CD4-positive, alpha-beta T cell (primary cell): ENCODE measurements at regions of chr12 and their contacts with region 1.

Region 1: DNA sequence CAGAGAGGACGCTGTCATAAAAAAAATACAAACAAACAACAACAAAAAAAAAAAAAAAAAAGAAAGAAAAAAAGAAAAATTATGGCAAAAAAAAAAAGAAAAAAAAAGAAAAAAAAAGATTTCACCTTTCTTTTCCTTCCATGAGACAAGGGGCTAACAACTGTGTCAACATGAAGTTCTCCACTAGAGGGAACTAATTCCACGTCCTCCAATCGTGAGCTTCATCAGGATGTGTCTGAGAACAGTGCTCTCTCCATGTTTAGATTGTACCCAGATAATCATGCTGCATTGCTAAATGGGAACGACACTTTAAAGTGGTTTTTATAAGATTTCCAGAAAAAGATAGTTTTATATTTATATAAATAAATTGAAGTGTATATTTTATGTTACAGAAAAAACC is 96.2 kb upstream of the PTPRB start:
- DNase-seq: peak in 3 of 14 experiments; percentile 39 to 40 (median 40)
- ATAC-seq: peak; percentile 68
- H3K4me3 ChIP-seq: no peak overlapping the region
- H3K4me3 Mint-ChIP-seq: no peak overlapping the region
- H3K27ac ChIP-seq: no peak overlapping the region
- H3K27ac Mint-ChIP-seq: no peak overlapping the region
- H3K4me1 ChIP-seq: no peaks in the 10 kb centered on the region
- H3K4me1 Mint-ChIP-seq: no peaks in the 10 kb centered on the region
- H3K27me3 ChIP-seq: no peaks in the 10 kb centered on the region
- H3K27me3 Mint-ChIP-seq: peaks cover 10% of the 10 kb centered on the region
- CTCF ChIP-seq: peak; percentile 56

Region 2: DNA sequence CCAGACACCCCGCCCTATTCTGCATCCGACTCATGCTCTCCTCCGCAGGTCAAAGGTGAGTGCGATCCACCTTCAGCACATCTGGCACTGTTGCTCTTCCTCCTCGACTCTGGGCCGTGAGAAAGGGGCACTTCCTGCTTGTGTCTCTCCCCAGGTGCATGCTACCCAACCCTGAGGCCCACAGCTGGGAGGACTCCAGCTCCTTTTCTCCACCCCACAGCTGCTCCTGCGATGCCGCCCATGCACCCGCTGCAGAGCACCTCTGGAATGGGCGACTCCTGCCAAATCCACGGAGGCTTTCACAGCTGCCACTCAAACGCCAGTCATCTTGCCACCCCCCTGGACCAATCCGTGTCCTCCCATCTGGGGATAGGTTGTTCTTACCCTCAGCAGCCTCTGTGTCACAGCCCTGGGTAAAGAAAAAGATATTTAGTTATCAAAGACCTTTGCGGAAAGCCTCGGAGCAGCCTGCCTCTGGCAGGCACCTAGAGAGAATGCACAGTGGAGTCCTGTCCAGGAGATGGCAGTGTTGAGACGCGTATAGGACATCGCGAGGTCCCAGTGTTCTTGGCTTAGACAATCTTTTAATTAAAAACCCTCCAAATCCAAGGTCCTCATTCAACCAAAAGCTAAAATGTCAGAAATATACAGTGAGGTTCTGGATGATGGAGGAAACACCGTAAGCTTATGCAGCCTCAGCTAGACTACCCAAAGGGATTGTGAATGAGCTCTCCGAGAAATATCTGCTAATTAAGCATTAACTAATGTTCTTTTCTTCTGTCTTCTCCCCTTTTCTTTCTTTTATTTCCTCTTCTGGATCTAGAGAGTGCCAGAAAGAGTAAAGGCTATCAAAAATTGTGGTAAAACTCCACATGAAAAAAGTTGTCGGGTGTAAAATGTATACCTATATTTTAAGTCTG is 854.1 kb before region 1 on chr12:
- CTCF ChIA-PET with region 1: no interaction called
- POLR2A ChIA-PET with region 1: no interaction called
- intact Hi-C with region 1: loop called (anchors 1 to 2 kb)
- DNase-seq: peak; percentile 36 to 78 (median 52)
- ATAC-seq: peak; percentile 92
- H3K4me3 ChIP-seq: no peak overlapping the region
- H3K4me3 Mint-ChIP-seq: no peak overlapping the region
- H3K27ac ChIP-seq: no peak overlapping the region
- H3K27ac Mint-ChIP-seq: no peak overlapping the region
- H3K4me1 ChIP-seq: no peaks in the 10 kb centered on the region
- H3K4me1 Mint-ChIP-seq: peaks cover 7% of the 10 kb centered on the region
- H3K27me3 ChIP-seq: peaks cover 0 to 2% of the 10 kb centered on the region in 2 experiments
- H3K27me3 Mint-ChIP-seq: peaks cover 45% of the 10 kb centered on the region
- CTCF ChIP-seq: peak; percentile 88

Region 3: DNA sequence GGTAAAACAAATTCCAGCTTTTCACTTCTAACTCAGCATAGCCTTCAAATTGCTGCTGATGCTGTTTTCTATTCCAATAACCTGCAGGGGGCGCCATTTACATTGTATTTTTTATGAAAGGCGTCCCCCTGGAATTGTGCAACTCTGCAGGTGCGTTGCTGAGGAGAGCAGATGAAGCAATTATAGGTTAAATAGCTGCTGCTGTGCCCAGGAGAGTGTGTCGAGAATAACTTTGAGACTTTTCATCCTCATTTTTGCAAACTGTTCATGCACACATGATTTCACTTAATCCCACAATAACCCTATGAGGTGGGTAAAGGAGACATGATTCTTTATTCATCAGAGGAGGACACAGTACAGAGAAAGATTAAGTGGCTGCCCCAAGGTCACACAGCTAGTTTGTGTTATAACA is 832.7 kb before region 1 on chr12:
- CTCF ChIA-PET with region 1: no interaction called
- POLR2A ChIA-PET with region 1: interaction called, 3 read pairs
- intact Hi-C with region 1: loop called (anchors 1 to 5 kb)
- DNase-seq: peak; percentile 26 to 71 (median 48)
- ATAC-seq: peak; percentile 29
- H3K4me3 ChIP-seq: no peak overlapping the region
- H3K4me3 Mint-ChIP-seq: no peak overlapping the region
- H3K27ac ChIP-seq: no peak overlapping the region
- H3K27ac Mint-ChIP-seq: no peak overlapping the region
- H3K4me1 ChIP-seq: no peaks in the 10 kb centered on the region
- H3K4me1 Mint-ChIP-seq: no peaks in the 10 kb centered on the region
- H3K27me3 ChIP-seq: no peaks in the 10 kb centered on the region
- H3K27me3 Mint-ChIP-seq: peaks cover 8% of the 10 kb centered on the region
- CTCF ChIP-seq: peak; percentile 87

Region 4: DNA sequence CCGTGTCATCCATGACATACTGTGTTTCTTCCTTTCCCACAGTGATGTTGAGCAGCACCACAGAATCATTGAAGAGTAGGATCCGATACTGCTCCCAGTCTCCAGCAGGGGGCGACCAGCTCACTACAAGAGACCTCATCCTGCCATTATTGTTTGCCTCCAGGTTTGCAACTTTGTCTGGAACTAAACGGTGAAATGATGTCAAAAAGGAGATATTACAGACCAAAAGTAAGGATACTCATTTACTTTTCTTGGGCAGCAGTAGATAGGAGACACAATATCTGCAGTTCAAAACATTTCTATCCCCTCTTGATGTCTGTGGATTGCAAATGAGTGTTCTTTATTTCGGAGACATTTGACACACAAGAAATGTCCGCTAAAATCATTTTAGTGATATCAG is 143.3 kb before region 1 on chr12:
- CTCF ChIA-PET with region 1: no interaction called
- POLR2A ChIA-PET with region 1: interaction called, 3 read pairs
- intact Hi-C with region 1: loop called (anchors 1 to 2 kb)
- DNase-seq: peak; percentile 7 to 60 (median 32)
- ATAC-seq: peak; percentile 73
- H3K4me3 ChIP-seq: no peak overlapping the region
- H3K4me3 Mint-ChIP-seq: no peak overlapping the region
- H3K27ac ChIP-seq: no peak overlapping the region
- H3K27ac Mint-ChIP-seq: no peak overlapping the region
- H3K4me1 ChIP-seq: no peaks in the 10 kb centered on the region
- H3K4me1 Mint-ChIP-seq: no peaks in the 10 kb centered on the region
- H3K27me3 ChIP-seq: peaks cover 0 to 5% of the 10 kb centered on the region in 2 experiments
- H3K27me3 Mint-ChIP-seq: peaks cover 33% of the 10 kb centered on the region
- CTCF ChIP-seq: peak; percentile 75

Region 5: DNA sequence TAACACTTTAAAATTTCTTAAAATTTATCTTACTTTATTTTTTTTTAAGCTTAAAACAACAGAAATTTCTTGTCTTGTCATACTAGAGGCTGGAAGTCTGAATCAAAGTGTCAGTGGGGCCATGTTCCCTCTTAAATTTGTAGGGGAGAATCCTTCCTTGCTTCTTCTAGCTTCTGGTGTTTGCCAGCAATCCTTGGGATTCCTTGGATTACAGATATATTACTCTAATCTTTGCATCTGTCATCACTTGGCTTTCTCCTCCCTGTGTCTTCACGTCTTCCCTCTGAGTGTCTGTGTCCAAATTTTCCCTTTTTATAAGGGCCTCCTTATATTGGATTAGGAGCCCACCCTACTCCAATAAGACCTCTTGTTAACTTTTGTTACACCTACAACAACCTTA is 39.5 kb after region 1 on chr12:
- CTCF ChIA-PET with region 1: no interaction called
- POLR2A ChIA-PET with region 1: no interaction called
- intact Hi-C with region 1: no loop called
- DNase-seq: no peak
- ATAC-seq: no peak
- H3K4me3 ChIP-seq: no peak overlapping the region
- H3K4me3 Mint-ChIP-seq: no peak overlapping the region
- H3K27ac ChIP-seq: no peak overlapping the region
- H3K27ac Mint-ChIP-seq: no peak overlapping the region
- H3K4me1 ChIP-seq: no peaks in the 10 kb centered on the region
- H3K4me1 Mint-ChIP-seq: no peaks in the 10 kb centered on the region
- H3K27me3 ChIP-seq: no peaks in the 10 kb centered on the region
- H3K27me3 Mint-ChIP-seq: no peaks in the 10 kb centered on the region
- CTCF ChIP-seq: no peak